Activated CD4-positive, alpha-beta T cell treated with anti-CD3 and anti-CD28 coated beads for 36 hours (primary cell): ENCODE measurements at regions of chr14 and their contacts with region 1.

Region 1: DNA sequence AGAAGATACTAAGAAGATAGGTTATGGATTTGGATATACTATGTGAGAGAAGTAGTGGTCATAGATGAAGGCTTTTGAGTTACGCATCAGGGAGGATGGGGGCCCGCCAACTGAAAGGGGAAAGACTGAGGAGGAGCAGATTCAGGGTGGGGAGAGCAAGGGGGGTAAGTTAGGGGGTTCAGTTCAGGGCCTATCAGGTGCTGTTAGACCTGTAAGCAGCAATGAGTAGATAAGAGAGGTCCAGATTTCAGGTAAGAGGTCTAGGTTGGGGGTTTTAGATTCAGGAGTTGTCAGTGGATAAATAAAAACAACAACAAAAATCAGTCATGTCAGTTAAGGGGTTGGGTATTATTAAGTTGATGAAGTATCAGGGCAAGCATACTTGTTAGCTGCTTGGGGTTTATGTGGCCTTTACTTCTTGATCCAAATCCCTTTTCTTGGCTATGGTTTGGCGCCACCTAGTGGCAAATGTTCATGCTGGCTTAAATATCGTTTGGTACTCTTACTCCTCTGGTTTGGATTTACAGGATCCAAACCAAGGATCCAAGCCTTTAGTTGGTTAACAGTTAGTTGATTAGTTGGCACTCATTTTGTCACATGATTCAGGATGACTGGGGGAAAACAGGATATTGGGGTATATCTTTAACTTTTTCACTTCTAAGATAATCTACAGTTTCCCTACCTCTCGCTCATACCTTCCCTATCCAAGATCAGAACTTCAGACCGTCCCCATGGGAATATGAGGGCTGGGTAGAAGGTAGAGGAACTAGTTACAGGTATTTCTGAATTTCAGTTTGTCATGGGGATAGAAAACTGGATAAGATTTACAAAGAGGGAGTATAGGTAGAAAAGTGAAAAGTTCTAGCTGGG is 65.1 kb downstream of the PCNX1 start:
- DNase-seq: peak; percentile 91
- ATAC-seq: peak; percentile 88
- H3K4me3 Mint-ChIP-seq: no peak overlapping the region
- H3K27ac Mint-ChIP-seq: peak overlapping the region; percentile 47
- H3K4me1 Mint-ChIP-seq: peaks cover 29% of the 10 kb centered on the region
- H3K27me3 Mint-ChIP-seq: no peaks in the 10 kb centered on the region

Region 2: DNA sequence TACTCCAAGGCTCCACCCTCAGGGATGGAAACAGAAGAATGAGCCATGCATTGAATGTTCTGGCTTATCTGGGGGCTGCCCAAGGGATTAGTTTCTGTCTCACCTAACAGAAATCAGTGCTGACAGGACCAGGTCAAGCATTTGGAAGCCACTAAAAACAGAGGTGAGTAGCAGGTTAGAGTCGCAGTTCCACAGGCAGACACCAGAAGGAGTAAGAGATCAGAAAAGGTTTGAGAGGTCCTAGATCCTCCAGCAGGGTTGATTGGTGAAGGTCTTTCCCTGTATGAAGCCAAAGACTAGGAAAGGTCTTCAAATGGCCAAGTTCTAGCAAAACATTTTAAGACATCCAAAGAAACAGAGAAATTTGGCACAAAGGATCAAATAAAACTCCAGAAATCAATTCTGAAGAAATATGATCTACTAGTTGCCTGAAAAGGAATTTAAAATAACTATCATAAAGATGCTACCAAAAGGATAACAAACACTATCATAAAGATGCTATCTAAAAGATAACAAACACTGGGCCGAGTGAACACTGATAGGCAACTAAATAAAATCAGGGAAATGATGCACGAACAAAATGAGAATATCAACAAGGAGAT is 350.1 kb before region 1 on chr14:
- CTCF ChIA-PET with region 1: interaction called, 3 read pairs
- POLR2A ChIA-PET with region 1: no interaction called
- intact Hi-C with region 1: loop called in 1 of 2 experiments (anchors 1 kb)
- DNase-seq: peak; percentile 68
- ATAC-seq: peak; percentile 80
- H3K4me3 Mint-ChIP-seq: no peak overlapping the region
- H3K27ac Mint-ChIP-seq: no peak overlapping the region
- H3K4me1 Mint-ChIP-seq: no peaks in the 10 kb centered on the region
- H3K27me3 Mint-ChIP-seq: no peaks in the 10 kb centered on the region

Region 3: GRCh38 chr14:70714055-70714621 is 258.2 kb before region 1 on chr14:
- CTCF ChIA-PET with region 1: no interaction called
- POLR2A ChIA-PET with region 1: no interaction called
- intact Hi-C with region 1: loop called in 1 of 2 experiments (anchors 10 kb)
- DNase-seq: peak; percentile 64
- ATAC-seq: no peak
- H3K4me3 Mint-ChIP-seq: no peak overlapping the region
- H3K27ac Mint-ChIP-seq: no peak overlapping the region
- H3K4me1 Mint-ChIP-seq: peaks cover 3% of the 10 kb centered on the region
- H3K27me3 Mint-ChIP-seq: no peaks in the 10 kb centered on the region

Region 4: GRCh38 chr14:70816525-70816924 is 155.8 kb before region 1 on chr14:
- CTCF ChIA-PET with region 1: interaction called, 16 read pairs
- POLR2A ChIA-PET with region 1: no interaction called
- intact Hi-C with region 1: loop called (anchors 1 kb)
- DNase-seq: no peak
- ATAC-seq: no peak
- H3K4me3 Mint-ChIP-seq: no peak overlapping the region
- H3K27ac Mint-ChIP-seq: no peak overlapping the region
- H3K4me1 Mint-ChIP-seq: peaks cover 10% of the 10 kb centered on the region
- H3K27me3 Mint-ChIP-seq: peaks cover 15% of the 10 kb centered on the region

Region 5: DNA sequence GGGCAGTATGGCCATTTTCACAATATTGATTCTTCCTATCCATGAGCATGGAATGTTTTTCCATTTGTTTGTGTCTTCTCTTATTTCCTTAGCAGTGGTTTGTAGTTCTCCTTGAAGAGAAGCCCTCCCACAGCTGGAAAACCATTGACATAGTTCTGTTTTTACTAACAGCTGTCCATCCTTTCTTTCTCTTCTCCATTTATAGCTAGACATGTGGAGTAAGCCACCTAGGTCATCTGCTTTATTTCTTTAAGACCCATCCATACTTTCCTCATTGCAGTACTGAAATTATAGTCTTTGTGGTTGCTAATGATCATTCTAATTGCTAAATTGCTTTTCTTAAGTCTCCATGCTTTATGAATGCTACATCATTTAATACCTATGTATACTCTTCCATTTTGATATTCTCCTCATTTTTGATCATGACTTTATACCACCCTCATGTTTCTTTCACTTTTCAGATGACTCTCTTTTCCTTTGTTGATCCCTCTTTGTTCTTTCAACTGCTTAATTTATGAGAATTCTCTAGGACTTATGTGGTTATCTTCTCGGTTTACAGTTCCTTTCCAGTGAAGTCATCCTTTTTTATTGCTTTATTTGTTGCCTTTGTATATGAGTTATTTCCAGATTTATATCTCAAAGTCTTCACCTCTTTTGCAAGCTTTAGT is 49.1 kb after region 1 on chr14:
- CTCF ChIA-PET with region 1: no interaction called
- POLR2A ChIA-PET with region 1: no interaction called
- intact Hi-C with region 1: no loop called
- DNase-seq: no peak
- ATAC-seq: peak; percentile 86
- H3K4me3 Mint-ChIP-seq: peak overlapping the region; percentile 4
- H3K27ac Mint-ChIP-seq: peak overlapping the region; percentile 68
- H3K4me1 Mint-ChIP-seq: peaks cover 33% of the 10 kb centered on the region
- H3K27me3 Mint-ChIP-seq: no peaks in the 10 kb centered on the region